Left ventricle myocardium superior (tissue), 1 donor: ENCODE measurements at regions of chr17 and their contacts with region 1.

Region 1: GRCh38 chr17:76504117-76504516 is 2.9 kb upstream of the RHBDF2 start:
- DNase-seq: no peak
- ATAC-seq: no peak

Region 2: DNA sequence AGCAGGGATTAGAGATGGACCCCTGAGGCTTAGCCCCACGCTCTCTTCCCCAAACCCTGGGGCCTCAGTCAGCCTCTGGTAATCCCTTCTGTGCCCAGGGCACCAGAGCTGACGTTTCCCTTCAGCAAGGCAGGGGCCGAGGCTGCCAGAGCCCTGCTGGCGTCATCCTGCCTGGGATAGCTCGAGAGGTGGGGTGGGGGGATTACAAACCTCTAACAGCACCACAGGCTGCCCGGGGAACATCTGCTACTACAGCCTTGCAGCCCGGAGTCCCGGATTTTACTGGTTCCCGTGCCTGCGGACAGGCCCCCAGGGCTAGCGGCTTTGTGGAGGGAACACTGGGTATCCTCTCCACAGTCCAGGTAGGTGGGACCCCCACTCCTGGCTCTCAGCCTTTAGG is 36.8 kb before region 1 on chr17 and contains the start of gene AANAT:
- intact Hi-C with region 1: loop called (anchors 2 kb)
- DNase-seq: peak; percentile 22
- ATAC-seq: no peak
- total RNA-seq, gene AANAT: not detected